WTC11 (cell line): ENCODE measurements at regions of chr15 and their contacts with region 1.

Region 1: DNA sequence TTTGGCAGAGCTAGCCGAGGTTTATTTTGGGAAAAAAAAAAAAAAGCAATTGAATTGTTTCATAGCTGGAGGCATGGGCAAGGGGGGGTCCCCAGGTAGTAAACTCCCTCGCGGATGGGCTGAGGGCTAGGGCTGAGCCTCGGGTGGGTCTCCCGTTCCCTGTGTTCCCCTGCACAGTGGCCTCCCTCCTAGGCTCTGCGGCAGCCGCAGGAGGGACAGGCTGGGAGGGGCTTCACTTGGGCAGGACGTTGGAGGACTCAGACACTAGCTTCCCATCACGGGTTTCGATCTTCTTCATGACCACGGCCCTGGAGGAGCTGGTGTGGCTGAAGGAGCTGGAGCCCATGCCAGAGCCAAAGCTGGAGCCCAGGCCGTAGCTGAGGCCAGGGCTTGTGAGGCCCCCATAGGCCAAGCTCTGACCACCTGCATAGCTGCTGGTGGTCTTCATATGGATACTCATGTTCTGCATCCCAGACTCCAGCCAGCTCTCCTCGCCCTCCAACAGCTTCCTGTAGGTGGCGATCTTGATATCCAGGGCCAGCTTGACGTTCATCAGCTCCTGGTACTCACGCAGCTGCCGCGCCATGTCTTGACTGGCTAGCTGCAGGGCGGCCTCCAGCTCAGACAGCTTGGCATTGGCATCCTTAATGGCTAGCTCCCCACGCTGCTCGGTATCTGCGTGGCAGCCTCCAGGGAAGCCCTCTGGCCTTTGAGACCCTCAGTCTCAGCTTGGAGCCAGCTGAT is 64.0 kb upstream of the CDAN1 start:
- DNase-seq: peak; percentile 67
- ATAC-seq: peak; percentile 39
- H3K4me3 Mint-ChIP-seq: no peak overlapping the region
- H3K27ac Mint-ChIP-seq: no peak overlapping the region
- H3K4me1 Mint-ChIP-seq: no peaks in the 10 kb centered on the region
- H3K27me3 Mint-ChIP-seq: no peaks in the 10 kb centered on the region
- CTCF ChIP-seq: no peak

Region 2: DNA sequence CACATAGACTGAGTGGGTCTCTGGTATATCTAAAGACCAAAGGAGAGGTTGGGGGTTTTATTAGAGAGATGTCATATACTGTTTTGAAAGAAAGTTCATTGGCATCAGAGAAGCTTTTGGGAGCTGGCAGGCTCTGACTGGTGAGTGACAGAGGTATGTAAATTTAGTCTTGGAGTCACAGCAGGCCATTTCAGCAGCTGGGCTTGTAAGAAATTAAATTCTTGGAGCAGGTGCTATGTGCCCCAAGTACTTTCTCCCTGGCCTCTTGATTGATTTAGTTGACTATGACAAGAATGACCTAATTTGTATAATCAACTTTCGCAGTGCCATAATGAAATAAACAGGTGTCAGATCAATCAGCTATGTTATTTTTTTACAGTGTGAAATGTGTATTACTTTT is 16.2 kb before region 1 on chr15:
- CTCF ChIA-PET with region 1: interaction called, 11 read pairs
- POLR2A ChIA-PET with region 1: no interaction called
- DNase-seq: no peak
- ATAC-seq: no peak
- H3K4me3 Mint-ChIP-seq: no peak overlapping the region
- H3K27ac Mint-ChIP-seq: peak overlapping the region; percentile 5; the same call in 1 of the 2 replicates
- H3K4me1 Mint-ChIP-seq: 0 out of 2 replicates have a peak, but pooled peaks cover 4% of the 10 kb centered on the region
- H3K27me3 Mint-ChIP-seq: no peaks in the 10 kb centered on the region
- CTCF ChIP-seq: no peak

Region 3: GRCh38 chr15:42826251-42826890 is 25.5 kb after region 1 on chr15:
- CTCF ChIA-PET with region 1: interaction called, 11 read pairs
- POLR2A ChIA-PET with region 1: no interaction called
- DNase-seq: no peak
- ATAC-seq: no peak
- H3K4me3 Mint-ChIP-seq: no peak overlapping the region
- H3K27ac Mint-ChIP-seq: no peak overlapping the region
- H3K4me1 Mint-ChIP-seq: no peaks in the 10 kb centered on the region
- H3K27me3 Mint-ChIP-seq: no peaks in the 10 kb centered on the region
- CTCF ChIP-seq: no peak

Region 4: DNA sequence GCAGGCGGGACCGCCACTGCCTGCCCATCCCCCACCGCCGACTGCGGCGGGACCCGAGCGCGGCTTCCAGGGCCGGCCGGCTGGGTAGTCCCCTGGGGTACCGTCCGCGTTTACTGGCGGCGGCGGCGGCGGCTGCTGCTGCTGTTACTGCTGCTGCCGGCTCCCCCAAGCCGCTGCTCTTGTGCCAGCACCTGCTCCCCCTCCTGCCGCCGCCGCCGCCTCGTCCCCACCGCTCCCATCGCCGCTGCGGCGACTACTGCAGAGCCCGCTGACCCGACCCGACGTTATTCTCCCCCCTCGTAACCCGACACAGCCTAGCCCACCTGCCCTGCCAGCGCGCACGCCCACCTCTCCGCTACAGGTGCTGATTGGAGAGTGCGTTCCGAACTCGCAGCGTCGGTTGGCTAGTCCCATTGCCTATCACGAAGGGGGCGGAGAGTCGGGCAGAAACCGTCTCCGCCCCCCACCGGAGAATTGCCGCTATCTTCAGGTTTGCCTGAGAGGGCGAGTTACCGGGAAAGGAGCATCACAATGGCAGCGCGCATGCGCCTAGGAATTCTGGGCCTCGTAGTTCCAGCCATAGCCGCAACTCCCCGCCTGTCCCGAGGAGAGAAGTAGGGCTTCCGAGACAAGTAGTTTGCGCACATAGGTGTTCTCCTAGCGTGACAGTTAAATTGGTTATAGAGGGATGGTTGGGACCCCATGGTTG is 119.8 kb after region 1 on chr15 and contains the start of gene TTBK2:
- CTCF ChIA-PET with region 1: interaction called, 14 read pairs
- POLR2A ChIA-PET with region 1: no interaction called
- DNase-seq: peak; percentile 98
- ATAC-seq: peak; percentile 98
- H3K4me3 Mint-ChIP-seq: peak within 1 kb of the TSS; percentile 98
- H3K27ac Mint-ChIP-seq: peak within 1 kb of the TSS; percentile 93
- H3K4me1 Mint-ChIP-seq: peaks cover 14% of the 10 kb centered on the region
- H3K27me3 Mint-ChIP-seq: peaks cover 15% of the 10 kb centered on the region
- CTCF ChIP-seq: no peak
- total RNA-seq, gene TTBK2: 18.6 to 21.9 TPM (median 21.5 TPM) in 3 replicates

Region 5: DNA sequence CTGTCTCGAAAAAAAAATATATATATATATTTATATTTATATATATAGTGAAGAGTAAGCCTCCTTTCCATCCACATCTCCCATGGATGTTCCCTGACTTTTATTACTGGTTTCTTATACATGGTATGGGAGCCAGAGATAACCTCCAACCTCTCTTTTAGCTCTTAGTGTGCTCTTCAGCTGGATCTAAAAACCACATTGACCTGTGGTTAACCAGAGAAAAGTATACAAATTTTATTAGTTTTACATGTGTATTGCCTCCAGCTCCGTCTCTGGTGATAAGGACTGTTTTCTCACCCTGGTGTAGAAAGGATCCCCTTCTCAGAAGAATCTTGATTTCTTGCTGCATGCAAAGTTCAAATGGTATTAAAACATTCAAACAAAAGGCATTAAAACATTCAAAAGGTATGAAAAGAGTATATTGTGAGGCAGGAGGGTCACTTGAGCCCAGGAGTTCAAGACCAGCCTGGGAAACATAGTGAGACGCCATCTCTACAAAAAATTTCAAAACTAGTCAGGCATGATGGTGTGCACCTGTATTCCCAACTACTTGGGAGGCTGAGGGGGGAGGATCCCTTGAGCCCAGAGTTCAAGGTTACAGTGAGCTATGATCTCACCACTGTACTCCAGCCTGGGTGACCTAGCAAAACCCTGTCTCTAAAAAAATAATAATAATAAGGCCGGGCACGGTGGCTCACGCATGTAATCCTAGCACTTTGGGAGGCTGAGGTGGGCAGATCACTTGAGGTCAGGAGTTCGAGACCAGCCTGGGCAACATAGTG is 133.2 kb after region 1 on chr15:
- CTCF ChIA-PET with region 1: interaction called, 62 read pairs
- POLR2A ChIA-PET with region 1: no interaction called
- DNase-seq: no peak
- ATAC-seq: no peak
- H3K4me3 Mint-ChIP-seq: no peak overlapping the region
- H3K27ac Mint-ChIP-seq: peak overlapping the region; percentile 70; the same call in 1 of the 2 replicates
- H3K4me1 Mint-ChIP-seq: no peaks in the 10 kb centered on the region
- H3K27me3 Mint-ChIP-seq: no peaks in the 10 kb centered on the region
- CTCF ChIP-seq: no peak